Left ventricle myocardium superior (tissue), 1 donor: ENCODE measurements at regions of chr1 and their contacts with region 1.

Region 1: DNA sequence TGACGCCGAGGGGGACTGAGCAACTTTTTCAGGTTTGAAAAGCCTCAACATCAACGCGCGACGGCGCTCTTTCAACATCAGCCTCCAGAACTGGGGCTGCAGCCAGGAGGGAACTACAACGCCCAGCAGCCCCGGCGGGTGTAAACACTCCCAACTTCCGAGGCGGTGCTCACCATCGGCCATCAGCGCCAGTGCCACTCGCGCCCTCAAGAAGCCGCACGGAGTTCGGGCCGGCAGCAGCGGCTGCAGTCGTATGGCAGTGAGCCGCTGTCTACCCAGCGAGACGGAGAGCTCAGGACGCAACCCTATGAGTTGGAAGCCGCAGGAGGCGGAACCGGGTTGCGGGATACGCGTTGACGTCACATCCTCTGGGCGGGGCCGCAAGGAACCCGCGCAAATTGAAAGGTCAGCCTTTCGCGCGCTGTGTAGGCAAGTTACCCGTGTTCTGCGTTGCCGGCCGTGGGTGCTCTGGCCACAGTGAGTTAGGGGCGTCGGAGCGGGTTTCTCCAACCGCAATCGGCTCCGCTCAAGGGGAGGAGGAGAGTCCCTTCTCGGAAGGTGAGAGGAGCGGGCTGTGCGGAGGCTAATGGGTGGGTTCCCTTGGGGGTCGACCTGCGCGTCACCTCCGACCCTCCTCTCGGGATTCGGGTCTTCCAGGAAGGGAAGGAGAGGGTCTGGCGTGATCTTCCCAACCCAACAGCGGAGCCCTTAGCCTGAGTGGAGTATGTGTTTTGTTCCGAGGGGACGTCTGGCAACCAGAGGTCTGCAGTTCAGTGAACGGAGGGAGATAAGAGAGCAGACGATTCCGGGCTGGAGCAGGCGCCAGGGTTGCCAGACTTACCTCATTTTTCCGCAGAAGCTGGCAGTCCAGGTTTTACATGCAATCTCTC is at the start of gene EXO1:
- DNase-seq: peak; percentile 90
- ATAC-seq: peak; percentile 99
- total RNA-seq, gene EXO1: 0.35 TPM

Region 2: GRCh38 chr1:241611063-241611462 is 237.0 kb before region 1 on chr1:
- intact Hi-C with region 1: loop called (anchors 10 kb)
- DNase-seq: no peak
- ATAC-seq: peak; percentile 91